A673 (cell line): ENCODE measurements at regions of chr6 and their contacts with region 1.

Region 1: DNA sequence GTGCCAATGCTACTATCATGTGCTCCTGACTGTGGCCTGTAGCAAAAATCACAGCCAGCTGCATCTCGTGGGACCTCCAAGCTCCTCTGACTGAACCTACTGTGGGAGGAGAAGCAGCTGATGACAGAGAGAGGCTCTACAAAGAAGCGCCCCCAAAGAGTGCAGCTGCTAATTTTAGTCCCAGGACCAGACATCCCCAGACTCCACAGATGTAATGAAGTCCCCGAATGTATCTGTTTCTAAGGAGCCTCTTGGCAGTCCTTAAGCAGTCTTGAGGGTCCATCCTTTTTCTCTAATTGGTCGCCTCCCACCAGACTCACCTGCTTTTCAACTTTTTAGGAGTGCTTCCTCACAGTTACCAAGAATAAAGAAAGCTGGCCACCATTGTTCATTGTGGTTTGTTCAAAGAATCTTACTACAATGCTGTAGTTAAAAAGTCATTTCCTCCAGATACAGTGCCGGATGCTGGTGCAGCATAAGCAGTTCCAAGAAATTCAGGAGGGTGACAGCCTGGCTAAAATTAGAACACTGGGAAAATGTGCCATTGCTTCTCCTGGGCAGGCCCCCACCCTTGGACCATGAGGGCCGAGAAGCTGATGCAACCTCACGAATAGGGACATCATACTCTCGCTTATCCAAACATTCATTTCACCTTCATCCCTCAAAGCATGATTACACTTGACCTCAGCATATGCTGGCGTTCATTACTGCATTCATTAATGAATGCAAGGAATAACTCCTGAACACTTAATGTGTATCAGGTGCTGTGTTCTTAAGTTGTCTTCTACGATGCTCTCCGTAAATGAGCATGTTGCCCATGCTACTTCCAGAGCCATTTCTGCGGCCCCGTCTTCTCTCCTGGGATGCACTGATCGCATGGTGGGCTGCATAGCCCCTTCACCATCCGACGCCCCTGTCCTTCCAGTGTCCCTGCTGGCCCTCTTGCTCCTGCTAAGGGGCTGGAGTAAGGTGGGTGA is 66.4 kb downstream of the LY86 start:
- DNase-seq: no peak
- H3K4me3 ChIP-seq: no peak overlapping the region
- H3K27ac ChIP-seq: no peak overlapping the region
- H3K4me1 ChIP-seq: no peaks in the 10 kb centered on the region
- H3K27me3 ChIP-seq: no peaks in the 10 kb centered on the region
- CTCF ChIP-seq: no peak

Region 2: GRCh38 chr6:7507600-7507999 is 852.7 kb after region 1 on chr6:
- CTCF ChIA-PET with region 1: no interaction called
- POLR2A ChIA-PET with region 1: interaction called, 35 read pairs
- intact Hi-C with region 1: no loop called
- DNase-seq: no peak
- H3K4me3 ChIP-seq: no peak overlapping the region
- H3K27ac ChIP-seq: no peak overlapping the region
- H3K4me1 ChIP-seq: no peaks in the 10 kb centered on the region
- H3K27me3 ChIP-seq: peaks cover 7% of the 10 kb centered on the region
- CTCF ChIP-seq: no peak